Ovary (tissue), 10 donors: ENCODE measurements at regions of chr1 and their contacts with region 1.

Region 1: GRCh38 chr1:51203121-51203873 is 32.8 kb upstream of the RNF11 start:
- DNase-seq: no peak
- H3K4me3 ChIP-seq: no peak overlapping the region
- H3K27ac ChIP-seq: no peak overlapping the region
- H3K4me1 ChIP-seq: no peaks in the 10 kb centered on the region
- H3K27me3 ChIP-seq: no peaks in the 10 kb centered on the region
- CTCF ChIP-seq: no peak
- EP300 ChIP-seq: no peak
- POLR2A ChIP-seq: no peak

Region 2: DNA sequence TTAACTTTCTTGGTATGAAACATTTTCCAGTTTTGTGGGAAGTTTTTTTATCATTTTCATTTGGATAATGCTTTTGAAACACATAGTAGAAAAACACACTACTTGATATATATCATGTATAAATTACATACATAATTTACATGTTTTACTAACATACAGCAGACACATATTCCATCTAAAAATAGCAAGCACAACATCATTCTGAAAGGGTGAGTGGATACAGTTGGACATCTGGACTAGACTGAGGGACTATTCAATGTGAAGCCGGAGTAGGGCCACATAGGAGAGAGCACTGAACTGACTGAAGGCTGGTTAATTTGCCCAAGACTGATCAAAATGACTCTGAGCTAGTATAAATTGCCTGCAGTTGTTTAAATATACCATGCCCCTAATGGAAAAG is 221.6 kb before region 1 on chr1:
- intact Hi-C with region 1: no loop called
- DNase-seq: no peak
- H3K4me3 ChIP-seq: no peak overlapping the region
- H3K27ac ChIP-seq: peak overlapping the region in 1 of 2 donors; percentile 99
- H3K4me1 ChIP-seq: peaks cover 2% of the 10 kb centered on the region
- H3K27me3 ChIP-seq: no peaks in the 10 kb centered on the region
- CTCF ChIP-seq: no peak
- EP300 ChIP-seq: no peak
- POLR2A ChIP-seq: no peak

Region 3: GRCh38 chr1:51296383-51297357 is 93.4 kb after region 1 on chr1:
- intact Hi-C with region 1: loop called in 2 of 4 experiments (anchors 10 kb)
- DNase-seq: peak; percentile 78 to 93 (median 88)
- H3K4me3 ChIP-seq: peak overlapping the region; percentile 36
- H3K27ac ChIP-seq: no peak overlapping the region
- H3K4me1 ChIP-seq: peaks cover 3% of the 10 kb centered on the region
- H3K27me3 ChIP-seq: no peaks in the 10 kb centered on the region
- CTCF ChIP-seq: peak; percentile 89 to 91 (median 91)
- EP300 ChIP-seq: no peak
- POLR2A ChIP-seq: no peak

Region 4: GRCh38 chr1:51313961-51314777 is 110.9 kb after region 1 on chr1:
- intact Hi-C with region 1: no loop called
- DNase-seq: no peak
- H3K4me3 ChIP-seq: no peak overlapping the region
- H3K27ac ChIP-seq: no peak overlapping the region
- H3K4me1 ChIP-seq: no peaks in the 10 kb centered on the region
- H3K27me3 ChIP-seq: no peaks in the 10 kb centered on the region
- CTCF ChIP-seq: no peak
- EP300 ChIP-seq: no peak
- POLR2A ChIP-seq: no peak

Region 5: GRCh38 chr1:51331206-51332100 is 128.2 kb after region 1 on chr1:
- intact Hi-C with region 1: no loop called
- DNase-seq: no peak
- H3K4me3 ChIP-seq: no peak overlapping the region
- H3K27ac ChIP-seq: no peak overlapping the region
- H3K4me1 ChIP-seq: peaks cover 1% of the 10 kb centered on the region
- H3K27me3 ChIP-seq: no peaks in the 10 kb centered on the region
- CTCF ChIP-seq: no peak
- EP300 ChIP-seq: no peak
- POLR2A ChIP-seq: no peak

Region 6: GRCh38 chr1:51372561-51372960 is 169.3 kb after region 1 on chr1:
- intact Hi-C with region 1: no loop called
- DNase-seq: no peak
- H3K4me3 ChIP-seq: no peak overlapping the region
- H3K27ac ChIP-seq: no peak overlapping the region
- H3K4me1 ChIP-seq: no peaks in the 10 kb centered on the region
- H3K27me3 ChIP-seq: no peaks in the 10 kb centered on the region
- CTCF ChIP-seq: no peak
- EP300 ChIP-seq: no peak
- POLR2A ChIP-seq: no peak